CD14-positive monocyte (primary cell): ENCODE measurements at regions of chr17 and their contacts with region 1.

Region 1: GRCh38 chr17:46841561-46842379 is 9.6 kb upstream of the WNT9B start:
- DNase-seq: peak in 2 of 3 donors; percentile 10 to 30
- H3K4me3 ChIP-seq: no peak overlapping the region
- H3K4me3 Mint-ChIP-seq: peak overlapping the region in 1 of 2 donors; percentile 72
- H3K27ac ChIP-seq: no peak overlapping the region
- H3K27ac Mint-ChIP-seq: no peak overlapping the region
- H3K4me1 ChIP-seq: peaks cover 0 to 6% of the 10 kb centered on the region in 2 donors
- H3K4me1 Mint-ChIP-seq: peaks cover 4% of the 10 kb centered on the region
- H3K27me3 ChIP-seq: peaks cover 5 to 10% of the 10 kb centered on the region in 2 donors
- H3K27me3 Mint-ChIP-seq: peaks cover 22 to 46% (median 22%) of the 10 kb centered on the region in 3 donors
- CTCF ChIP-seq: peak; percentile 94

Region 2: GRCh38 chr17:46876353-46876887 is 34.6 kb after region 1 on chr17:
- intact Hi-C with region 1: no loop called
- DNase-seq: no peak
- H3K4me3 ChIP-seq: no peak overlapping the region
- H3K4me3 Mint-ChIP-seq: no peak overlapping the region
- H3K27ac ChIP-seq: peak overlapping the region in 1 of 2 donors; percentile 1
- H3K27ac Mint-ChIP-seq: no peak overlapping the region
- H3K4me1 ChIP-seq: peaks cover 41 to 44% of the 10 kb centered on the region in 2 donors
- H3K4me1 Mint-ChIP-seq: peaks cover 44% of the 10 kb centered on the region
- H3K27me3 ChIP-seq: no peaks in the 10 kb centered on the region
- H3K27me3 Mint-ChIP-seq: peaks cover under 1 to 5% (median 1%) of the 10 kb centered on the region in 3 donors
- CTCF ChIP-seq: no peak

Region 3: GRCh38 chr17:46940621-46941404 is 99.0 kb after region 1 on chr17:
- intact Hi-C with region 1: loop called (anchors 2 to 5 kb)
- DNase-seq: peak; percentile 43 to 60 (median 51)
- H3K4me3 ChIP-seq: no peak overlapping the region
- H3K4me3 Mint-ChIP-seq: no peak overlapping the region
- H3K27ac ChIP-seq: no peak overlapping the region
- H3K27ac Mint-ChIP-seq: peak overlapping the region in 2 of 7 donors; percentile 12 to 63
- H3K4me1 ChIP-seq: peaks cover 4 to 11% of the 10 kb centered on the region in 2 donors
- H3K4me1 Mint-ChIP-seq: peaks cover 19% of the 10 kb centered on the region
- H3K27me3 ChIP-seq: peaks cover 0 to 4% of the 10 kb centered on the region in 2 donors
- H3K27me3 Mint-ChIP-seq: peaks cover 6 to 17% (median 14%) of the 10 kb centered on the region in 3 donors
- CTCF ChIP-seq: peak; percentile 91

Region 4: DNA sequence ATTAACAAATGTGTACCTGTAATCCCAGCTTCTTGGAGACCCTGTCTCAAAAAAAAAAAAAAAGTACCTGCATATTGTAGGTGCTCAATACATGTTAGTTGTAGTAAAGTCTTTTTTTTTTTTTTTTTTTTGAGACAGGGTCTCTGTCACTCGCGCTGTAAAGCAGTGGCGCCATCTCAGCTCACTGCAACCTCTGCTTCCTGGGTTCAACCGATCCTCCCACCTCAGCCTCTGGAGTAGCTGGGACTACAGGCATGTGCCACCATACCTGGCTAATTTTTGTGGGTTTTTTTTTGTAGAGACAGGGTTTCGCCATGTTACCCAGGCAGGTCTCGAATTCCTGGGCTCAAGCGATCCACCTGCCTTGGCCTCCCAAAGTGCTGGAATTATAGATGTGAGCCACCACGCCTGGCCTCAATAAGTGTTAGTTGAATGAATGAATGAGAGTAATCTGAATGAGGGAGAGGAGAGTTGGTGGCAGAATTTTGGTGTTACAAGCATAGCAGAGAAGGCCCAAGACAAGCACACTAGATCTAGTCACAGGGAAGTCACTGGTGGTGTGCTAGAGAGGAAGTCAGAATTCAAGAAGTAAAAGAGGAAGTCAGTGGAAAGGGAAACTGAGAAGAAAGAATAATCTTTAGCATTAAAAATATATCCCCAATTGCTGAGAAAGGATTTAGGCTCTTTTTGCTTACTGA is 358.0 kb after region 1 on chr17:
- intact Hi-C with region 1: no loop called
- DNase-seq: peak; percentile 64 to 78 (median 75)
- H3K4me3 ChIP-seq: peak overlapping the region; percentile 2 to 71 (median 48)
- H3K4me3 Mint-ChIP-seq: peak overlapping the region; percentile 76 to 87
- H3K27ac ChIP-seq: peak overlapping the region; percentile 67 to 98
- H3K27ac Mint-ChIP-seq: peak overlapping the region; percentile 88 to 99 (median 97)
- H3K4me1 ChIP-seq: peaks cover 24 to 32% of the 10 kb centered on the region in 2 donors
- H3K4me1 Mint-ChIP-seq: peaks cover 27% of the 10 kb centered on the region
- H3K27me3 ChIP-seq: no peaks in the 10 kb centered on the region
- H3K27me3 Mint-ChIP-seq: peaks cover 4 to 7% (median 6%) of the 10 kb centered on the region in 3 donors
- CTCF ChIP-seq: no peak